ENCODE measurements at regions of chr3 and their contacts with region 1.

Region 1: DNA sequence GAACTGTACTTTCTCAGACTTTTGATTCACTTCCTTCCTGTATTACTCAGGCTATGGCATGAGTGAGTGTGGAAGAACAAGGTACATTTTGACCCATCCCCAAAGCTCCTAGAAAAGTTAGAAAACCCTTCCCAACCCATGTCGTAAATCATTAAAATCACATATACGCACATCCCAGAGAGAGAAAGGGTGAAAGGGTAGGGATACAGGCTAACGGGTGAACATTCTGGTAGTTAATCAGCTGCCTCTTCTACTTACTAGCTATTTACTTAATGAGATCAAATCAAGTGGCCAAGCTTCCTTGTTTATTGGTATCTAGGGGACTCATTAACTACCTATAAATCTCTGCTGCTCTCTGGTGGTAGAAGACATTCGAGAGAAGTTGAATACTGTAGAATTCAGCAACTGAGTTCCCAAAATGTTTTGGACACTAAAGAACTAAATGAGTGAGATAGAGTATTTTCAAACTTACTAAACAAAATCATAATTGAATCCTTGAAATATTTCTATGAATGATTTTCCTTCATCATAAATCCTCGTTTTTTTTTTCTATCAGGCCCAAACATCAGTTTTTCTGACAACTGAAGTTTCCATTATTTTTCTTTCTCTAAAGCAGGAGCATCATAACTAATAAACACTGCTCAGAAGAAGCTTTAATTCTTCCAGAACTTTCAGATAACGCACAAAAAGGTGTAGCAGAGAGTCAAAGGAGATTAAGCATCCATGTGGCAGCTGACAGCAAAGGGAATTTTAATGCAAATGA is 124.2 kb downstream of the IMPG2 start:
- DNase-seq: peak; percentile 48
- ATAC-seq: peak; percentile 84
- H3K4me3 ChIP-seq: no peak overlapping the region
- H3K27ac ChIP-seq: no peak overlapping the region
- H3K4me1 ChIP-seq: no peaks in the 10 kb centered on the region
- H3K27me3 ChIP-seq: no peaks in the 10 kb centered on the region
- CTCF ChIP-seq: peak; percentile 52 to 78 (median 69)
- POLR2A ChIP-seq: no peak
- RAD21 ChIP-seq: peak; percentile 85

Region 2: GRCh38 chr3:100316641-100317069 is 879.5 kb before region 1 on chr3:
- CTCF ChIA-PET with region 1: no interaction called
- POLR2A ChIA-PET with region 1: no interaction called
- RAD21 ChIA-PET with region 1: no interaction called
- intact Hi-C with region 1: loop called (anchors 5 kb)
- DNase-seq: peak; percentile 46
- ATAC-seq: peak; percentile 86
- H3K4me3 ChIP-seq: no peak overlapping the region
- H3K27ac ChIP-seq: no peak overlapping the region
- H3K4me1 ChIP-seq: peaks cover 3 to 4% of the 10 kb centered on the region in 2 experiments; a peak in 2 of 4 replicates
- H3K27me3 ChIP-seq: no peaks in the 10 kb centered on the region
- CTCF ChIP-seq: peak; percentile 32 to 71 (median 65); a peak in 5 of 6 replicates
- POLR2A ChIP-seq: no peak
- RAD21 ChIP-seq: peak; percentile 73

Region 3: DNA sequence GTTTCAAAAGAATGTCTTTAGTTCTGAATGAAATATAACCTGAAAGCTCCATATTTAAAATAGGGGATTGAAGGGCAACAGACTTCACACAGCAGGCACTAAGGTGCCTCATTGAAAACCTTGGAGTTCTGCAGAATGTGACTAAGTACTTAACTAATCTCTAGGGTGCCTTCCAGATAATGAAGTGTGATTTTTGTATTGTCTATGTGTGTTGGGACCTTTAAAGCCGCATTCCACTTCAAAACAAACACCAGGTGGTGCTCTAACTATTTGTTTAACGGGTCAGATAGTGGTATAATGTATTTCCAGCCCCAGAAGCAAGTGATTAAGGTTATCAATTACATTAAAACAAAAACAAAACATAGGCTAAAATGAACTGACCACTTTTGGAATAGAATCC is 458.8 kb before region 1 on chr3:
- CTCF ChIA-PET with region 1: interaction called, 7 read pairs
- POLR2A ChIA-PET with region 1: no interaction called
- RAD21 ChIA-PET with region 1: no interaction called
- intact Hi-C with region 1: loop called (anchors 5 kb)
- DNase-seq: no peak
- ATAC-seq: peak; percentile 63
- H3K4me3 ChIP-seq: no peak overlapping the region
- H3K27ac ChIP-seq: no peak overlapping the region
- H3K4me1 ChIP-seq: no peaks in the 10 kb centered on the region
- H3K27me3 ChIP-seq: no peaks in the 10 kb centered on the region
- CTCF ChIP-seq: peak; percentile 20 to 50 (median 41); a peak in 5 of 6 replicates
- POLR2A ChIP-seq: no peak
- RAD21 ChIP-seq: peak; percentile 22

Region 4: GRCh38 chr3:100825574-100825973 is 370.6 kb before region 1 on chr3:
- CTCF ChIA-PET with region 1: interaction called, 18 read pairs
- POLR2A ChIA-PET with region 1: no interaction called
- RAD21 ChIA-PET with region 1: no interaction called
- intact Hi-C with region 1: loop called (anchors 2 kb)
- DNase-seq: no peak
- ATAC-seq: no peak
- H3K4me3 ChIP-seq: no peak overlapping the region
- H3K27ac ChIP-seq: no peak overlapping the region
- H3K4me1 ChIP-seq: no peaks in the 10 kb centered on the region
- H3K27me3 ChIP-seq: no peaks in the 10 kb centered on the region
- CTCF ChIP-seq: no peak
- POLR2A ChIP-seq: no peak
- RAD21 ChIP-seq: no peak

Region 5: GRCh38 chr3:101069901-101070798 is 126.0 kb before region 1 on chr3:
- CTCF ChIA-PET with region 1: interaction called, 24 read pairs
- POLR2A ChIA-PET with region 1: no interaction called
- RAD21 ChIA-PET with region 1: interaction called, 5 to 8 read pairs
- intact Hi-C with region 1: loop called (anchors 1 kb)
- DNase-seq: peak; percentile 57
- ATAC-seq: peak; percentile 100
- H3K4me3 ChIP-seq: no peak overlapping the region
- H3K27ac ChIP-seq: no peak overlapping the region
- H3K4me1 ChIP-seq: peaks cover 0 to 16% of the 10 kb centered on the region in 2 experiments; a peak in 1 of 4 replicates
- H3K27me3 ChIP-seq: no peaks in the 10 kb centered on the region
- CTCF ChIP-seq: peak; percentile 73 to 95 (median 95); a peak in 5 of 6 replicates
- POLR2A ChIP-seq: no peak
- RAD21 ChIP-seq: peak; percentile 69

Region 6: GRCh38 chr3:101340591-101340990 is 144.5 kb after region 1 on chr3:
- CTCF ChIA-PET with region 1: no interaction called
- POLR2A ChIA-PET with region 1: no interaction called
- RAD21 ChIA-PET with region 1: no interaction called
- intact Hi-C with region 1: no loop called
- DNase-seq: no peak
- ATAC-seq: no peak
- H3K4me3 ChIP-seq: no peak overlapping the region
- H3K27ac ChIP-seq: no peak overlapping the region
- H3K4me1 ChIP-seq: no peaks in the 10 kb centered on the region
- H3K27me3 ChIP-seq: no peaks in the 10 kb centered on the region
- CTCF ChIP-seq: no peak
- POLR2A ChIP-seq: no peak
- RAD21 ChIP-seq: no peak

Region 7: GRCh38 chr3:102630531-102630930 is 1434.4 kb after region 1 on chr3:
- CTCF ChIA-PET with region 1: no interaction called
- POLR2A ChIA-PET with region 1: no interaction called
- RAD21 ChIA-PET with region 1: no interaction called
- intact Hi-C with region 1: no loop called
- DNase-seq: no peak
- ATAC-seq: no peak
- H3K4me3 ChIP-seq: no peak overlapping the region
- H3K27ac ChIP-seq: no peak overlapping the region
- H3K4me1 ChIP-seq: no peaks in the 10 kb centered on the region
- H3K27me3 ChIP-seq: no peaks in the 10 kb centered on the region
- CTCF ChIP-seq: no peak
- POLR2A ChIP-seq: no peak
- RAD21 ChIP-seq: no peak